ENCODE measurements at regions of chr14 and their contacts with region 1.

Region 1: DNA sequence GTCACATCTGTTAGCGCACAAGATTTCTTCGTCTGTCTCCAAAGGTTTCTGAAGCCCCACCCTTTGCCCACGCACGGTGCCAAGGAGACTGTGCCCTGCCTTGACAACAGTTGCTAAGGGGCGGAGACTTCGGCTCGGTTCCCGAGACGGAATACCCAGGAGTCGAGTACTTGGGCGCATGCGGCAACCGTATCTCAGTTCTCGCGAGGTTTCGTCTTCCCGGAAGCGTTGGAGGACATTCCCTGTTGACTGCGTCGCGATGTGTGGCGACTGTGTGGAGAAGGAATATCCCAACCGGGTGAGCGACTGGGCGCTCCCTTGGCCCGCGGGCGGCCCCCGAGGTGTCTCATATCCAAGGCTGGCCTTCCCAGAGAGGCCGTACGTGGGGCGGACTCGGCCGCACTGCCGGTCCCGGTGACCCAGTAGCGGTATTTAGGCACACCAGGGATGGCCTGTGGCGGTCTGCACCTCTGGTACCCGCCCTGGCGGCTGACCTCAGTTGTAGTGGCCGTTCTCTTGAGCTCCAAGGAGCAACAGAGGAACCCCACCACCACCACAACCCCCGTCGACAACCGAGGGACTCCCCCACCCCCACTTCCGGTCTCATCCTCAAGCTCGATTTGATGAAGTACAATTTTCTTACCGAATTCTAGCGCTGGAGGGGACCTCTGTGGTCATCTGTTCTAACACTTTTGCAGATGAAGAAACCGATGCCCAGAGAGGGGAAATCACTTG is at the start of gene CHURC1:
- DNase-seq: peak; percentile 98
- H3K4me3 Mint-ChIP-seq: peak within 1 kb of the TSS; percentile 78
- H3K27ac Mint-ChIP-seq: peak within 1 kb of the TSS; percentile 88
- H3K4me1 Mint-ChIP-seq: peaks cover 51% of the 10 kb centered on the region
- H3K27me3 Mint-ChIP-seq: no peaks in the 10 kb centered on the region
- total RNA-seq, gene CHURC1: 49.6 to 59.7 TPM

Region 2: DNA sequence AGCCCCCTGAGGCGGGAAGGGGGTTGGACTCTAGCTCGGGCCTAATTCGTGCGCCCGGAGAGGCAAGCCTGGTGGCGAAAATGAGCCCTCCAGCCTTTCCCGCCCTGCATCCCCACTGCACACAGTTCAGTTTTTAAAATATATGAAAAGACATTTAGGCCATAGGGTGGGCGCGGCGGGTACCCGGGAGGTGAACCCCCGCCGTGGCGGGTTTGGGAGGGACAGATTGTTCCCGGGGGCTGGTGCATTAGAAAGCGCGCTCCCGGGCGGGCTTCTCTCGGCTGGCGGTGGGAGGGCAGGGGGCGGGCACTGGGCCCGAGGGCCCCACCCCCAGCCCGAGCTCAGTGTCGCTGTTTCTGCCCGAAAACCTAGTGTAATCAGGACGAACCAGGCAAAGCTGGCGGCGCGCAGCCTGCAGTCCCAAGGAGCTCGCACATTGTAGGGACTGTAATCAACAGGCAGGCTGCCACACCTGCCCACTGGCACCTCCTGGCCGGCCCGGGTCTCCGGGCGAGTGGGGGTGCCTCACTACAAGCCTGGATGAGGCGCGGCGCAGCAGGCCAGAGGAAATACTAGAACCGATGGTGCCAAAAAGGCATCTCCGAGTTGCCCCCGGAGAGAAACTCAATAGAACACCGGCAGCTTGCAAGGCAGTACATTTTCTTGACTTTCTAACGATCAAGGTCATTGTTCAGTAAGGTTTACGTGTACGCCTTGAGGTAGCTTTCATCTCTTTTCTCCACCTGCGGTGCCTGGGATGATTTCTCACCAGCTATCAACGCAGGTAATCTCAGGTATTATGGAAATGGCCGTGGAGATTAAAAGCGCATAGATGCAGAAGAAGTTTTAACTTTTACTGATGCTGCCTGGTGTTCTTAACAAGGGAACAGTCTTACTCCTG is 33.9 kb before region 1 on chr14:
- CTCF ChIA-PET with region 1: interaction called, 5 read pairs
- intact Hi-C with region 1: loop called (anchors 2 kb)
- DNase-seq: peak; percentile 67
- H3K4me3 Mint-ChIP-seq: peak overlapping the region; percentile 81
- H3K27ac Mint-ChIP-seq: no peak overlapping the region
- H3K4me1 Mint-ChIP-seq: peaks cover 1% of the 10 kb centered on the region
- H3K27me3 Mint-ChIP-seq: peaks cover 13% of the 10 kb centered on the region

Region 3: DNA sequence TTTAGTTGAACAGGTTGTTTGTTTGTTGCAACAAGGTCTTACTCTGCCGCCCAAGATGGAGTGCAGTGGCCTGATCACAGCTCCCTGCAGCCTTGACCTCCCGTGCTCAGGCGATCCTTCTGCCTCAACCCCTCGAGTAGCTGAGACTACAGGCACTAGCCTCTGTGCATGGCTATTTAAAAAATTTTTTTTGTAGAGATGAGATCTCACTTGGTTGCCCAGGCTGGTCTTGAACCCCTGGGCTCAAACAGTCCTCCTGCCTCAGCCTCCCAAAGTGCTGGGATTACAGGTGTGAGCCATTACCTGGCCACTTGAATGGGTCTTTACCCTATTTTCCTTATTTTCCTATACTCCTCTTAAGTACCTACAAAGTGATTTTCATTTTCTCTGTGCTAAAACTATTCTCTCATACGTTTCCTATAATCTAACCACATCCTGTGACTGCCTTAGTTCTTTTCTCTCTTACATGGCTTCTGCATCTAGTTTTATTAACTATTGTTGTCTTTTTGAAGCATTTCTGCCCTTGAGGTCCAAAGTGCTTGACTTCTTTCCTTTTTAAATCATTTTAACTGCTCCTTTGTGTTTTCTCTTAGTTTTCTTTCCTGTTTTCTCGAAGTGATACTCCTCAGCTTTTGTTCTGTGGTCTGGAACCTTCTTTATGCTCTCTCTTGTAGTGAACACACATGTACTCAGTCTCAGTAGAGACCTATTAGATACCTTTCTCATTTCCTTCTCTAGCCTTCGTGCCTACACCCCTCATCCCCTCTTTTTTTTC is 14.0 kb after region 1 on chr14:
- CTCF ChIA-PET with region 1: interaction called, 12 read pairs
- intact Hi-C with region 1: loop called (anchors 1 kb)
- DNase-seq: no peak
- H3K4me3 Mint-ChIP-seq: no peak overlapping the region
- H3K27ac Mint-ChIP-seq: no peak overlapping the region
- H3K4me1 Mint-ChIP-seq: peaks cover 25% of the 10 kb centered on the region
- H3K27me3 Mint-ChIP-seq: no peaks in the 10 kb centered on the region

Region 4: DNA sequence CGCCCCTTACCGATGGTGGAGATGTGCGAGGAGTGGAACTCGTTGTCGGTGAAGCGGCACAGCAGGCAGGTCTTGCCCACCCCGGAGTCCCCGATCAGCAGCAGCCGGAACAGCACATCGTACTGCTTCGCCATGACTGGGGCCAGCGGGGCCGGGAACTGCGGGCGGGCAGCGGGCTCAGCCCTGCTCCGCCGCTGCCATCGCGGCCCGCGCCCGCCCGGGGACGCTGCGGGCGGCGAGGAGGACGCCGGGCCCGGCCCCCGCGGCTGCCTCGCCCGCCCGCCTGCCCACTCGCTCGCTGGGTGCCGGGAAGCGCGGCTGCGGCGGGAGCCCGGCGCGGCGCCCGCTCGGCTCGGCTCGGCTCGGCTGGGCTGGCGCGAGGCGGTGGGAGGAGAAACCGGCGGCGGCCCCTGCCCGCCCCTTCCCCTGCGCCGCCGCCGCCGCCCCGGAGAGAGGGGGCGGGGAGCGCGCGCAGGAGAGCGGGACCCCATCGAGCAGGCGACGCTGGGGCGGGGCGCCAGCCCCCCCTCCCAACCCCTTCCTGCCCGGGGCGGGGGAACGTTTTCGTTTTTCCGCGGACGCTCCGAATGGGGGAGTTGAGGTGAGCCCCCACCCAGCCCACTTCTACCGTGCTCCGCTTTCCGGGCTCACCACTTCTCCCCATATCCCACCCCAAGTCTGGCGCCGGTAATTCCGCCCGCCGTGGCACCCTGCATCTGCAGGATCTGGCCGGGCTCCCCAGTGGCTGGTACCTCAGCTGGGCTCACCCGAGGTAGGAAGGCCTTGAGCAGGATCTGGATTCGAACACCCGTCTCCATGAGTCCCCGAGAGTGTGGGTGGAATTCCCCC is 57.8 kb after region 1 on chr14 and contains the start of gene RAB15:
- CTCF ChIA-PET with region 1: interaction called, 5 read pairs
- intact Hi-C with region 1: loop called (anchors 1 kb)
- DNase-seq: peak; percentile 33
- H3K4me3 Mint-ChIP-seq: peak within 1 kb of the TSS; percentile 75
- H3K27ac Mint-ChIP-seq: no peak within 1 kb of the TSS
- H3K4me1 Mint-ChIP-seq: peaks cover 10% of the 10 kb centered on the region
- H3K27me3 Mint-ChIP-seq: no peaks in the 10 kb centered on the region
- total RNA-seq, gene RAB15: 2.4 TPM